OCI-LY7 (cell line): ENCODE measurements at regions of chr7 and their contacts with region 1.

Region 1: DNA sequence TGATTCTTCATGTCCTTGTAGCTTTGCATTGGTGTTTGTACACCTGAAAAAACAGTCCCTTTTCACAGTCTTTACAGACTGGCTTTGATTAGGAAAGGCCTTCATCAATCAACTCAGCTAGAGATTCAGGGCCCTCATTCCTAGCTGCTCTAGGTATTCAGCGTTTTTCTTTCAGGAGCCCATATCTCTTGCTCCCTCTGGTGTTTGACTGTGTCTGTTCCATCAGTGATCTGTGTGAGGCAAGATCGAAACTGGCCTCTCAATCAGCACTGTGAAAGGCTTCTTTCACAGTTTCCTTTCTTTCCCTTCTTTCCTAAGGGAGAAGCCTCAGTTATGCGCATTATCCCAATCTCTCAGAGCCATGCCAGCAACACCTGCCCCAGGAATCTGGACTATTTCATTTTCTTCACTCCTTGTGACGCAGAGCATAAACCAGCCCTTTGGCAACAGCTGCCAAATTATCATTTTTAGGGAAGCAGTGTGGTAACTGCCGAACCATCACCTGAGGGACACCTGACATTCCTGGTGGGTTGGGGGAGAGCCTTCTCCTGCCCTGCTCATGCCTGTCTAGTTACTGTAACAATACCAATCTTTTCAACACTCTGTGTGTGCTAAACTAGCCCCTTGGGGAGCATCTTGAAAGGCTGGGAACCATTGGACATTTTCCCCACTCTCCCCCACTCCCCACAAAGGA is 75.7 kb upstream of the CCDC71L start:
- DNase-seq: peak; percentile 57
- H3K4me3 ChIP-seq: no peak overlapping the region
- H3K27ac ChIP-seq: no peak overlapping the region
- H3K4me1 ChIP-seq: peaks cover 5% of the 10 kb centered on the region
- CTCF ChIP-seq: peak; percentile 74

Region 2: GRCh38 chr7:106542550-106543220 is 194.0 kb before region 1 on chr7:
- CTCF ChIA-PET with region 1: interaction called, 3 read pairs
- POLR2A ChIA-PET with region 1: no interaction called
- intact Hi-C with region 1: loop called (anchors 1 kb)
- DNase-seq: peak; percentile 51
- H3K4me3 ChIP-seq: no peak overlapping the region
- H3K27ac ChIP-seq: no peak overlapping the region
- H3K4me1 ChIP-seq: no peaks in the 10 kb centered on the region
- CTCF ChIP-seq: peak; percentile 80

Region 3: DNA sequence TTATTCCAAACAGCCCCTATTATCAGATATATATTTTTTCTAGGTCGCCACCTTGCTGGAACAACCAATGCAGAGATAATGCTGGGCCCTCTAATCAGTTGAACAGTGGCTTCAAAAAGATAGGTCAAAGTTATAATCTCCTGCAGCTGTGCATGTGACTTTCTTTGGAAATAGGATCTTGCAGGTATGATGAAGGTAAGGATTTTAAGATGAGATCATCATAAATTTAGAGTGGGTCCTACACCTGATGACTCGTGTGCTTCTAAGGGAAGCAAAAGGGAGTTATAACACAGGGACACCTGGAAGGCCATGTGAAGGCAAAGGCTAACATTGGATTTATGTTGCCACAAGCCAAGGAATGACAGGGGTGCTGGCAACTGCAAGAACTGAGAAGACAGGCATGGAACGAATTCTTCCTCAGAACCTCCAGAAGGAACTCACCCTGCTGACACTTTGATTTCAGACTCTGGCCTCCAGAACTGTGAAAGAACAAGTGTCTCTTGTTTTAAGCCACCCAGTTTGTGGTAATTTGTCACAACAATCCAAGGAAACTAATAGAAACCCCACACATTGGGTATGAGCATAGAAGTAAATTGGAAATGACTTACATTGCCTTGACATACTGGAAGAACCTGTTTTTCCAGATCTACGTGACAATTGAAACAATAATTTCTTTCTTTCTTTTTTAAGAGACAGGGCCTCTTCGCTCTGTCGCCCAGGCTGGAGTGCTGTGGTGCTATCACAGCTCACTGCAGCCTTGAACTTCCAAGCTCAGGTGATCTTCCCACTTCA is 110.1 kb before region 1 on chr7:
- CTCF ChIA-PET with region 1: no interaction called
- POLR2A ChIA-PET with region 1: no interaction called
- intact Hi-C with region 1: no loop called
- DNase-seq: no peak
- H3K4me3 ChIP-seq: no peak overlapping the region
- H3K27ac ChIP-seq: no peak overlapping the region
- H3K4me1 ChIP-seq: no peaks in the 10 kb centered on the region
- CTCF ChIP-seq: no peak